GM10248 (cell line): ENCODE measurements at regions of chr1 and their contacts with region 1.

Region 1: DNA sequence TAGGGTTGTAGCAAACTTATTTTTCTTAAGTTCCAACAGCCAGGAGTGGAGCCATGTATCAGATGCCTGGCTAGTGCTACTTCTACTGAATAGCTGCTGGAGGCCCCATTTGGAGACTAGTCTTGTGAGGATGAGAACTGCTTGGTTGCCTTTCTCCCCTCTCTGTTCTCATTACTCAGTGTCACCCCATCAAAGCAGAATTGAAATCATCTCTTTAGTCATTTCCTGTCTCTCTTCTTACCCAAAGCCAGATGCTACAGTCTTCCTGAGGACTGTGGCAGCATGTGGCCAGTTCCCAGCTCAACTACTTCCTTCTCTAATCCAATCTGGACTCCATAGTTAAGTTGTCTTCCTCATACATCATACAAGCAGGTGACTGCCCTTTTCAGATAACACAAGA is 197.5 kb downstream of the BRINP2 start:
- DNase-seq: no peak
- CTCF ChIP-seq: no peak

Region 2: GRCh38 chr1:177355595-177355994 is 12.7 kb before region 1 on chr1:
- CTCF ChIA-PET with region 1: interaction called, 26 read pairs
- POLR2A ChIA-PET with region 1: no interaction called
- DNase-seq: no peak
- CTCF ChIP-seq: no peak